Activated CD4-positive, alpha-beta T cell treated with anti-CD3 and anti-CD28 coated beads for 36 hours (primary cell): ENCODE measurements at regions of chr17 and their contacts with region 1.

Region 1: GRCh38 chr17:54992797-54993639 is 24.5 kb downstream of the STXBP4 start:
- DNase-seq: no peak
- ATAC-seq: peak; percentile 33
- H3K4me3 Mint-ChIP-seq: no peak overlapping the region
- H3K27ac Mint-ChIP-seq: no peak overlapping the region
- H3K4me1 Mint-ChIP-seq: no peaks in the 10 kb centered on the region
- H3K27me3 Mint-ChIP-seq: no peaks in the 10 kb centered on the region

Region 2: DNA sequence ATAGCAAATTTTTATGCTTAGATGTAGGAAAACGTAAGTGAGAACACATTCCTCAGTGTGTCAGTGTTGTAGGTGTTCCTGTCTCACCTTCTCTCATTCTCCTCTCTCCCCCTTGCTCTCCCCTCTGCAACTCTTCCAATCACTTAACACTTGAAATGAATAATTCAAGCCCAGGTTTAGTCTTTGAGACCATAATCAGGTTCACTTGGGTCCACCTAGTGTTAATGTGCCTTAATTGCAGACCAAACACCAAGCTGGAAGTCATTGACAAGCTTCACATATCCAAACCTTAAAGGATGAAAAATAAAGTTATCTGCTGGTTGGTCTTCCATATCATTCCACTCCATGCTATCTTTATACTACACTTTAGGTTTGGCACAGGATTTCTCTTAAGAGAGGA is 12.5 kb after region 1 on chr17:
- CTCF ChIA-PET with region 1: interaction called, 27 read pairs
- POLR2A ChIA-PET with region 1: no interaction called
- intact Hi-C with region 1: no loop called
- DNase-seq: no peak
- ATAC-seq: no peak
- H3K4me3 Mint-ChIP-seq: no peak overlapping the region
- H3K27ac Mint-ChIP-seq: no peak overlapping the region
- H3K4me1 Mint-ChIP-seq: no peaks in the 10 kb centered on the region
- H3K27me3 Mint-ChIP-seq: no peaks in the 10 kb centered on the region

Region 3: GRCh38 chr17:55238179-55238930 is 245.3 kb after region 1 on chr17:
- CTCF ChIA-PET with region 1: interaction called, 3 read pairs
- POLR2A ChIA-PET with region 1: no interaction called
- intact Hi-C with region 1: loop called in 1 of 2 experiments (anchors 10 kb)
- DNase-seq: peak; percentile 91
- ATAC-seq: peak; percentile 99
- H3K4me3 Mint-ChIP-seq: peak overlapping the region; percentile 74
- H3K27ac Mint-ChIP-seq: peak overlapping the region; percentile 59
- H3K4me1 Mint-ChIP-seq: peaks cover 14% of the 10 kb centered on the region
- H3K27me3 Mint-ChIP-seq: peaks cover 11% of the 10 kb centered on the region

Region 4: GRCh38 chr17:55295411-55296170 is 302.6 kb after region 1 on chr17:
- CTCF ChIA-PET with region 1: interaction called, 20 read pairs
- POLR2A ChIA-PET with region 1: no interaction called
- intact Hi-C with region 1: loop called (anchors 1 kb)
- DNase-seq: peak; percentile 72
- ATAC-seq: peak; percentile 78
- H3K4me3 Mint-ChIP-seq: no peak overlapping the region
- H3K27ac Mint-ChIP-seq: no peak overlapping the region
- H3K4me1 Mint-ChIP-seq: no peaks in the 10 kb centered on the region
- H3K27me3 Mint-ChIP-seq: peaks cover 2% of the 10 kb centered on the region

Region 5: GRCh38 chr17:55348749-55349354 is 355.8 kb after region 1 on chr17:
- CTCF ChIA-PET with region 1: interaction called, 70 read pairs
- POLR2A ChIA-PET with region 1: interaction called, 3 read pairs
- intact Hi-C with region 1: loop called (anchors 1 to 2 kb)
- DNase-seq: peak; percentile 64
- ATAC-seq: no peak
- H3K4me3 Mint-ChIP-seq: no peak overlapping the region
- H3K27ac Mint-ChIP-seq: no peak overlapping the region
- H3K4me1 Mint-ChIP-seq: peaks cover 11% of the 10 kb centered on the region
- H3K27me3 Mint-ChIP-seq: peaks cover 3% of the 10 kb centered on the region

Region 6: GRCh38 chr17:55356434-55357328 is 363.7 kb after region 1 on chr17:
- CTCF ChIA-PET with region 1: interaction called, 70 read pairs
- POLR2A ChIA-PET with region 1: interaction called, 3 read pairs
- intact Hi-C with region 1: no loop called
- DNase-seq: peak; percentile 83
- ATAC-seq: peak; percentile 94
- H3K4me3 Mint-ChIP-seq: no peak overlapping the region
- H3K27ac Mint-ChIP-seq: no peak overlapping the region
- H3K4me1 Mint-ChIP-seq: peaks cover 2% of the 10 kb centered on the region
- H3K27me3 Mint-ChIP-seq: peaks cover 8% of the 10 kb centered on the region

Region 7: DNA sequence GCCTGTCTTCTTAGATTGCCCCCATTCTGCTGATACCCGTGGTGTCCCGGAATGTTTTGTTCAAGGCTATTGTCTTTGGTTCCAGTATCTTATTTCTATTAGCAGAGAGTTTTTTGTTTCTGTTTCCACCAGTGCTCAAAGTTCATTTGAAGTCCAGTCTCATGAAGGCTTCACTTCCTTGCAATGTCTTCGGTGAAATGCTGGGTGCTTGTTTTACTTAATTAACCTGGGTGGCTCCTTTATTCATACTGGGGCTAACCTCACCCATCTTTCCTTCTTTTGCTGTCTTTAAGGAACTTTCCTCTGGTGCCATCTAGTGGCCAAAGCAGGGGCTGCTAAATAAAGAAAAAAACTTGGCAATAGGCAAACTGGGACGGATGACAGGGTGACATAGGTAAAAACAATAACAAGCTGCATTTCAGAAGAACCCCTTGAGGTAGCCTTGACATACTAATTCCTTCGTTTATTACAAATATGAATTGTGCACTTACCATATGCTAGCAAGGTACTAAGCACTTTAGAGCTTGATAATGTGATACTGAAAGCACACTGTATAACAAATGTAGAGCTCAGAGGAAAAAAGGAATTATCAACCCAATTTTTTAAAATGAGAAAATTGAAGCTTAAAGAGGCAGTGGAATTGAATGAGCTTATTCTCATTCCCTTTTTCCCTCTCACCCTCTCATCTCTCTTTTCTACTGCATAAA is 521.0 kb after region 1 on chr17:
- CTCF ChIA-PET with region 1: interaction called, 5 read pairs
- POLR2A ChIA-PET with region 1: no interaction called
- intact Hi-C with region 1: loop called (anchors 5 kb)
- DNase-seq: peak; percentile 77
- ATAC-seq: peak; percentile 66
- H3K4me3 Mint-ChIP-seq: no peak overlapping the region
- H3K27ac Mint-ChIP-seq: no peak overlapping the region
- H3K4me1 Mint-ChIP-seq: no peaks in the 10 kb centered on the region
- H3K27me3 Mint-ChIP-seq: peaks cover 2% of the 10 kb centered on the region